PC-3 (cell line): ENCODE measurements at regions of chr19 and their contacts with region 1.

Region 1: GRCh38 chr19:53951436-53952346 is 11.0 kb upstream of the CACNG8 start:
- DNase-seq: no peak
- ATAC-seq: no peak
- H3K4me3 ChIP-seq: no peak overlapping the region
- H3K27ac ChIP-seq: no peak overlapping the region
- H3K4me1 ChIP-seq: no peaks in the 10 kb centered on the region
- H3K27me3 ChIP-seq: peaks cover 30% of the 10 kb centered on the region
- CTCF ChIP-seq: no peak

Region 2: GRCh38 chr19:53927739-53928138 is 24.0 kb before region 1 on chr19:
- CTCF ChIA-PET with region 1: no interaction called
- POLR2A ChIA-PET with region 1: interaction called, 14 read pairs
- intact Hi-C with region 1: no loop called
- DNase-seq: peak; percentile 78
- ATAC-seq: peak; percentile 54; the same call in 1 of the 2 replicates
- H3K4me3 ChIP-seq: no peak overlapping the region
- H3K27ac ChIP-seq: no peak overlapping the region
- H3K4me1 ChIP-seq: no peaks in the 10 kb centered on the region
- H3K27me3 ChIP-seq: peaks cover 8% of the 10 kb centered on the region
- CTCF ChIP-seq: no peak

Region 3: GRCh38 chr19:53983457-53984289 is 32.0 kb after region 1 on chr19:
- CTCF ChIA-PET with region 1: no interaction called
- POLR2A ChIA-PET with region 1: no interaction called
- intact Hi-C with region 1: no loop called
- DNase-seq: no peak
- ATAC-seq: no peak
- H3K4me3 ChIP-seq: no peak overlapping the region
- H3K27ac ChIP-seq: no peak overlapping the region
- H3K4me1 ChIP-seq: peaks cover 17% of the 10 kb centered on the region
- H3K27me3 ChIP-seq: no peaks in the 10 kb centered on the region
- CTCF ChIP-seq: no peak